GM12878 (cell line): ENCODE measurements at regions of chr7 and their contacts with region 1.

Region 1: DNA sequence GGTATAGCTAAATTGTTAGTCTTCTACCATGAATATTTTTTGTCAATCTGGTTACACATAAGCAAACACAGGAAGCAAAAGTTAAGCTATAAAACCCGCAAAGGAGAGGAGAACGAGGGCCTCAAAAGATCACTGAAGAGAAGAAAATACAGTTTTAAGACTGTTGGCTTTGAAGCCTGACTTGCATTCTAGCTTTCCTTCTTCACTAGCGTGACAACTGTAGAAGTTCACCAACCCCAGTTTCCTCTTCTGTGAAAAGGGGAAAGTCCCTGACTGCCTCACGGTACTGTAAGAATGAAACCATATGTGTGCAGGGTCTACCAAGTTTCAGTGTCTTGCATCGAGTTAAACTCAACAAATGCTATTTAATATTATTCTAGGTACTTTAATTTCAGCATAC is 7.5 kb upstream of the LRRN3 start:
- DNase-seq: peak; percentile 88
- ATAC-seq: peak; percentile 98
- H3K4me3 ChIP-seq: no peak overlapping the region
- H3K27ac ChIP-seq: peak overlapping the region; percentile 25; the same call in 1 of the 2 replicates
- H3K4me1 ChIP-seq: peaks cover 38% of the 10 kb centered on the region
- H3K27me3 ChIP-seq: no peaks in the 10 kb centered on the region
- CTCF ChIP-seq: no peak
- EP300 ChIP-seq: peak; percentile 83 to 87; a peak in 3 of 4 replicates
- POLR2A ChIP-seq: no peak
- RAD21 ChIP-seq: peak; percentile 31; the same call in 1 of the 2 replicates

Region 2: DNA sequence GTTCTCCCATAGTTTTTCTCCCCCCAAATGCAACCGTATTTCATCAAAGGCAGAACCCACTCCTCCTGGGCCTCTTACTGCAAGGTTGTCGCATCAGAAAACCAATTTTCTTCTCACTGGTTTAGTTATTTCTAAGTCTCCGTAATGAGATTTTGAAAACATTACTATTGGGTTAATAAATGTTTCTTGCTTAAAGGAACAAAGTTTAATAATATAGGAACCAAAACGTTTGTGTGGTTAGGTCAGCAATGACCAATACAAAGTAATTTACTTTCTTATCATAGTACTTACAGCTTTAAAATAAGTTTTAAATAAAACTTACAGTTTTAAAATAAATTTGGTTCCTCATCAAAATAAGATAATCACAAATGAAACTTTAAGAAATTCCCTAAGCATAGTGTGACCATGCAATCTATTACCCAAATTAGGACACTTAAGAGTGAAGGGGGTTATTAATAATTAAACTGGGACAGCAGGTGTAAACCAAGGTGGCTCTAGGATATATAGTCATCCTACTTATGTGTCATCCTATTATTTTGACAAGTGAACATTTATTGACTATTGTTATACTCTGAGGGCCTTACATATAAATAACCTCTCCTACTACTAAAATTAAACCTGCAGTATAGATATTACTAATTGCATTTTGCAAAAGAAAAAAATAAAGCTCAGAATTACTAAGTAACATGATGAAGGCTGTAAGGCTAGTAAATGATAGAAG is 407.9 kb before region 1 on chr7:
- CTCF ChIA-PET with region 1: no interaction called
- POLR2A ChIA-PET with region 1: no interaction called
- RAD21 ChIA-PET with region 1: interaction called, 3 read pairs
- SMC1A ChIA-PET with region 1: no interaction called
- in situ Hi-C with region 1: no loop called
- intact Hi-C with region 1: loop called (anchors 5 kb)
- DNase-seq: no peak
- ATAC-seq: peak; percentile 92
- H3K4me3 ChIP-seq: no peak overlapping the region
- H3K27ac ChIP-seq: no peak overlapping the region
- H3K4me1 ChIP-seq: no peaks in the 10 kb centered on the region
- H3K27me3 ChIP-seq: no peaks in the 10 kb centered on the region
- CTCF ChIP-seq: no peak
- EP300 ChIP-seq: no peak
- POLR2A ChIP-seq: no peak
- RAD21 ChIP-seq: no peak

Region 3: GRCh38 chr7:111029574-111030251 is 53.7 kb before region 1 on chr7:
- CTCF ChIA-PET with region 1: interaction called, 4 read pairs
- POLR2A ChIA-PET with region 1: interaction called, 3 read pairs
- RAD21 ChIA-PET with region 1: interaction called, 3 read pairs
- SMC1A ChIA-PET with region 1: no interaction called
- in situ Hi-C with region 1: no loop called
- intact Hi-C with region 1: loop called (anchors 5 kb)
- DNase-seq: peak; percentile 13
- ATAC-seq: peak; percentile 62
- H3K4me3 ChIP-seq: no peak overlapping the region
- H3K27ac ChIP-seq: no peak overlapping the region
- H3K4me1 ChIP-seq: no peaks in the 10 kb centered on the region; the same call in 1 of the 2 replicates
- H3K27me3 ChIP-seq: no peaks in the 10 kb centered on the region
- CTCF ChIP-seq: no peak
- EP300 ChIP-seq: no peak
- POLR2A ChIP-seq: no peak
- RAD21 ChIP-seq: no peak

Region 4: DNA sequence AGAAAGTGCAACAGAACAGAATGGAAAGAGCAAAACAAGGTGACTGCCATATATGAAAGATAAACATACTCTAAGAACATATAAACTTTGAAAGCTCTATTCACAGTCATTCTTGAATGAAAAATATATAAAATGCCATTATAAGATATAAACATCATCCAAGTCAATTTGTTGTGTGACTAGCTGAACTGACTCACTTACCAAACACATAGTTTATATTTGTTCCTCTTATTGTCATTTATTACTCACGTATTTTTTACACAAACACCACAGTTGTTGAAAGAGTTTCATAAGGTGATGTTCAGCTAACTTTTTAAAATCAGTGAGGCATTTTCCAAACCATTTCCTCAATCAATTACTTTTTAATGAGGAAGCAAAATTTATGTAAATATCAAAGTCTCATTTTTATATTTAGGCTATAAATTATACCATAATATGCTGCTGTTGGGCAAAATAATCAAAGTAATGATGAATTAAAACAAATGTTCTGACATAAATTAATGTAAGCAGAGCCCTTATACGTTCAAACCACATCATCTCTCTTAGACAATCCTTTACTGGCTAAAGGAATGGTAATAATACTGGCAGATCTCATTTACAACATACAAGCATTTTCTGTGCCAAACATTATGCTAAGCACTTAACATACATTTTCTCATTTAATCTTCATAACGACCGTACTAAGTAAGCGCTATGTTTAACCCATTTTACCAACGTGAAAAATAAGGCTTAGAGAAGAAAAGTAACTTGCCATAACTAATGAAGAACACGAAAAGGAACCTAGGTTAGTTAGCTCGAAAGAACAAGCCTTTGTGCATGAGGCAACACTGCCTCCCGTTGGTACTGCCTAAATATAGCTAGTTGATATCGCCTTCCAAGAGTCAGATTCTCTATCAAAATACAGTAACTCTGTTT is 14.9 kb after region 1 on chr7:
- CTCF ChIA-PET with region 1: interaction called, 18 read pairs
- POLR2A ChIA-PET with region 1: interaction called, 4 read pairs
- RAD21 ChIA-PET with region 1: interaction called, 9 read pairs
- SMC1A ChIA-PET with region 1: interaction called, 29 read pairs
- in situ Hi-C with region 1: no loop called
- intact Hi-C with region 1: no loop called
- DNase-seq: no peak
- ATAC-seq: peak; percentile 68
- H3K4me3 ChIP-seq: no peak overlapping the region
- H3K27ac ChIP-seq: no peak overlapping the region
- H3K4me1 ChIP-seq: no peaks in the 10 kb centered on the region
- H3K27me3 ChIP-seq: no peaks in the 10 kb centered on the region
- CTCF ChIP-seq: peak; percentile 58 to 71 (median 60)
- EP300 ChIP-seq: no peak
- POLR2A ChIP-seq: no peak
- RAD21 ChIP-seq: peak; percentile 66

Region 5: GRCh38 chr7:111413796-111414195 is 330.4 kb after region 1 on chr7:
- CTCF ChIA-PET with region 1: no interaction called
- POLR2A ChIA-PET with region 1: no interaction called
- RAD21 ChIA-PET with region 1: no interaction called
- SMC1A ChIA-PET with region 1: no interaction called
- in situ Hi-C with region 1: no loop called
- intact Hi-C with region 1: no loop called
- DNase-seq: no peak
- ATAC-seq: no peak
- H3K4me3 ChIP-seq: no peak overlapping the region
- H3K27ac ChIP-seq: no peak overlapping the region
- H3K4me1 ChIP-seq: no peaks in the 10 kb centered on the region
- H3K27me3 ChIP-seq: no peaks in the 10 kb centered on the region
- CTCF ChIP-seq: no peak
- EP300 ChIP-seq: no peak
- POLR2A ChIP-seq: no peak
- RAD21 ChIP-seq: no peak

Region 6: DNA sequence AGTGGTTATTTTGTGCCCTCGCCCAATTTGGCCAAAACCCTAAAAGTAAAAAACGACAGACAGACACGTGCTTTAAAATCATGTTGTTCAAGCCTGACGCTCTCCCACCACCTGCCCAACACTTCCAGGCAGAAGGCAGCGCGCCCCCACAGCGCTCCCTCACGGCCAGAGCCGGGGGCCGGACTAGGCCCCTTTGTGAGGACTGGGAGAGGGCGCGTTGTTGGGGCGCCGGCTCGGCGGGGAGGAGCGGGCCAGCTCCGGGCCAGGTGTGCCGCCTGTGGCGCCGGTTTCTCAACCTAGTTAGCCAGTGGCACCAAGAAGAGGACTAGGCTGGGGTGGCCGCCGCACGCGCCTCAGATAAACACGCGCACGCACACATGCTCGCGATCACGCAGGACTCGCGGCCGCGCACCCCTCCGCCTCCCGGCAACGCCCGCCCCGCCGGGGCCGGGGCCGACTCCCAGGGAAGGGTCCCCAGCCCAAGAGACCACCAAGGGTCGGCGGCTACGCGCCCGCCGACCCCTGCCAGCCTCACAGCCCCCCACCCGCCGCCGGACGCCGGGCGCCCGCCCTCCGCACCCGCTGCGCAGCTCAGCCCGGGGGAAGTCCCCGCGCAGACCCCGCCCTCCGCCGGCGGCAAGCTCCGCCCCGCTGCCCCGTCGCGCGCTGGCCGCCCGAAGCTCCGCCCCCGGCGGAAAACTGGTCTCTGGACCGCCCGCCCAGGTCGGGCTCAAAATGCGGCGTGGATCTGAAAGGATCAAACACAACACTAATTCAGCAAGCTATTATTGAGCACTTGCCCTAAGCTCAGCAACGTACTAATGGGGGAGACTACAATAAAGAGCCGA is 478.7 kb after region 1 on chr7 and contains the start of gene IMMP2L:
- CTCF ChIA-PET with region 1: interaction called, 3 read pairs
- POLR2A ChIA-PET with region 1: no interaction called
- RAD21 ChIA-PET with region 1: interaction called, 5 read pairs
- SMC1A ChIA-PET with region 1: interaction called, 5 read pairs
- in situ Hi-C with region 1: no loop called
- intact Hi-C with region 1: loop called (anchors 5 kb)
- DNase-seq: peak; percentile 46
- ATAC-seq: peak; percentile 90
- H3K4me3 ChIP-seq: peak within 1 kb of the TSS; percentile 71
- H3K27ac ChIP-seq: peak within 1 kb of the TSS; percentile 84
- H3K4me1 ChIP-seq: peaks cover 11% of the 10 kb centered on the region
- H3K27me3 ChIP-seq: no peaks in the 10 kb centered on the region
- CTCF ChIP-seq: peak; percentile 41 to 51 (median 44); a peak in 4 of 6 replicates
- EP300 ChIP-seq: no peak
- POLR2A ChIP-seq: peak; percentile 83
- RAD21 ChIP-seq: peak; percentile 65
- polyA plus RNA-seq, gene IMMP2L: 41.8 to 46.3 TPM